Activated T-helper 2 cell treated with anti-CD3 and anti-CD28 coated beads, Interferon-gamma antibody, Interleukin-2, Interleukin-4, amounts not matched to agents 10 μg/mL and 5 μg/mL and 100 μg/mL, durations not matched to agents 14 hours and 24 hours and 36 hours (primary cell): ENCODE measurements at regions of chr15 and their contacts with region 1.

Region 1: GRCh38 chr15:69058830-69059556 is 44.5 kb downstream of the NOX5 start:
- DNase-seq: peak; percentile 51
- H3K4me3 Mint-ChIP-seq: no peak overlapping the region
- H3K27ac Mint-ChIP-seq: no peak overlapping the region
- H3K4me1 Mint-ChIP-seq: peaks cover 16% of the 10 kb centered on the region
- H3K27me3 Mint-ChIP-seq: peaks cover 24% of the 10 kb centered on the region

Region 2: GRCh38 chr15:69225355-69226025 is 166.5 kb after region 1 on chr15:
- intact Hi-C with region 1: loop called (anchors 2 kb)
- DNase-seq: no peak
- H3K4me3 Mint-ChIP-seq: no peak overlapping the region
- H3K27ac Mint-ChIP-seq: no peak overlapping the region
- H3K4me1 Mint-ChIP-seq: no peaks in the 10 kb centered on the region
- H3K27me3 Mint-ChIP-seq: peaks cover 2% of the 10 kb centered on the region

Region 3: DNA sequence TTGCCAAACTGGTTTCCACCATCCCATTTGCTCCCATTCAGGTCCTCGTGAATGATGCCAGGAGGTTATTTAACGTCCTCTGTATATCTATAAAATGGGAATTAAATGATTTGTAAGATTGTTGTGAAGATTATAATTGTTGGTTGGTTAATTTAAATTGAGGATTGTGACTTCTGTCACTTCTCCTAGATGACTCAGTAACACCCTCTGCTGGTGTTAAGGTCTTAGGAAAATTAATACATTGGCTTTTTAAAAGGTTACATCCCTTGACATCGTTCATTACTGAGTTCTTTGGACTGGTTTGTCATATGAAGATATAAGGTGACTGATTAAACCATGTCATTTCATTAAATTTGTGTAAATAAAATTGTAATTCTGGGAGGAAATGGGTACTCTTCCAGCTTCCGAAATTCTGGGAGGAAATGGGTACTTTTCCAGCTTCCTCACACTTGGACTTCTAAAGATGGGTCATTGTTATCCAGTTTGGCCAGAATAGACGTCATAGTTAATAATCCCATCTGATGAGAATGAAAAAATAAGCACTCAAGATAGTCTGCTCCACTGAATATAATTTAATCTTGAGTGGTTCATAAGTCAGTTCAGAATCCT is 206.5 kb after region 1 on chr15:
- intact Hi-C with region 1: loop called (anchors 2 kb)
- DNase-seq: no peak
- H3K4me3 Mint-ChIP-seq: no peak overlapping the region
- H3K27ac Mint-ChIP-seq: no peak overlapping the region
- H3K4me1 Mint-ChIP-seq: no peaks in the 10 kb centered on the region
- H3K27me3 Mint-ChIP-seq: no peaks in the 10 kb centered on the region

Region 4: GRCh38 chr15:69320977-69321554 is 262.1 kb after region 1 on chr15:
- intact Hi-C with region 1: loop called (anchors 1 kb)
- DNase-seq: no peak
- H3K4me3 Mint-ChIP-seq: no peak overlapping the region
- H3K27ac Mint-ChIP-seq: peak overlapping the region; percentile 50
- H3K4me1 Mint-ChIP-seq: peaks cover 21% of the 10 kb centered on the region
- H3K27me3 Mint-ChIP-seq: peaks cover 40% of the 10 kb centered on the region

Region 5: GRCh38 chr15:69394556-69395282 is 335.7 kb after region 1 on chr15:
- intact Hi-C with region 1: loop called (anchors 1 kb)
- DNase-seq: peak; percentile 67
- H3K4me3 Mint-ChIP-seq: no peak overlapping the region
- H3K27ac Mint-ChIP-seq: no peak overlapping the region
- H3K4me1 Mint-ChIP-seq: peaks cover 7% of the 10 kb centered on the region
- H3K27me3 Mint-ChIP-seq: peaks cover 14% of the 10 kb centered on the region

Region 6: GRCh38 chr15:69468241-69469121 is 409.5 kb after region 1 on chr15:
- intact Hi-C with region 1: loop called (anchors 5 kb)
- DNase-seq: peak; percentile 78
- H3K4me3 Mint-ChIP-seq: peak overlapping the region; percentile 5
- H3K27ac Mint-ChIP-seq: peak overlapping the region; percentile 75
- H3K4me1 Mint-ChIP-seq: peaks cover 22% of the 10 kb centered on the region
- H3K27me3 Mint-ChIP-seq: peaks cover 30% of the 10 kb centered on the region